ENCODE measurements at regions of chr1 and their contacts with region 1.

Region 1: DNA sequence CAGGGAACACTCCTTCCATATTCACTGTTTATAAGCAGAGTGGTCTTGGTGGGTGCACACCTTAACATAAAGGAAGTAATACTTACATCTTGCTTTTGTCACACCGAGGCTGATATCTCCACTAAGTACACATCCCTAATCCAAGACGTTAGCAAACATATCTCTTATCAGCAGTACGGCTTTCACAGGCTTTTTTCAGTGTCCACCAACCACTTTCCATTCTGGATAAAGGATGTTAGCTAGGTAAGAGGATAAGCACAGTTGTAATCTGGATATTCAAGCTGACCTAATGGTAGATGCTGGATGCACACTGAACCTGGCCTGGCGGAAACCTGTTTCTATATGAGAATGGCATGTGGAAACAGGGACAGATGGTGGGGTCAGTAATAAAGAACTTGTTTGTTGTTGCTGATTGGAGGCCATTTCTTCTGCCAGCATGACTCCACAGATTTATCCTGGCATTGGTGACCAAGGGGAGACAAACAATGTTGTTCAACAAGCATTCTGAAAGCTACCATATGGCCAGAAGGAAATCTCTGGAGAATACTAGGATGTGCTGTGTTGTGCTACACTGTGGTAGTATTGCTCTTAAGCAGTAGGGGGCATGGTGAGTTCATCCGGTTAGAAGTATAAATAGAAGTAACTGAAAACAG is 416.4 kb downstream of the PTBP2 start:
- DNase-seq: peak in 1 of 2 donors; percentile 15
- ATAC-seq: peak; percentile 98 to 99
- H3K4me3 ChIP-seq: peak overlapping the region; percentile 20 to 34 (median 26)
- H3K27ac ChIP-seq: peak overlapping the region in 3 of 4 donors; percentile 33 to 40 (median 35)
- H3K4me1 ChIP-seq: peaks cover 0 to 8% of the 10 kb centered on the region in 2 donors
- H3K27me3 ChIP-seq: no peaks in the 10 kb centered on the region
- CTCF ChIP-seq: peak in 4 of 5 experiments; percentile 47 to 64 (median 60)
- POLR2A ChIP-seq: no peak

Region 2: GRCh38 chr1:97013941-97014340 is 124.0 kb before region 1 on chr1:
- in situ Hi-C with region 1: no loop called
- intact Hi-C with region 1: no loop called
- DNase-seq: no peak
- ATAC-seq: no peak
- H3K4me3 ChIP-seq: no peak overlapping the region
- H3K27ac ChIP-seq: no peak overlapping the region
- H3K4me1 ChIP-seq: peaks cover 0 to 4% of the 10 kb centered on the region in 2 donors
- H3K27me3 ChIP-seq: no peaks in the 10 kb centered on the region
- CTCF ChIP-seq: no peak
- POLR2A ChIP-seq: no peak

Region 3: GRCh38 chr1:97820470-97821188 is 682.6 kb after region 1 on chr1:
- in situ Hi-C with region 1: no loop called
- intact Hi-C with region 1: loop called (anchors 5 kb)
- DNase-seq: no peak
- ATAC-seq: peak in 1 of 2 donors; percentile 56
- H3K4me3 ChIP-seq: no peak overlapping the region
- H3K27ac ChIP-seq: no peak overlapping the region
- H3K4me1 ChIP-seq: peaks cover 0 to 5% of the 10 kb centered on the region in 2 donors
- H3K27me3 ChIP-seq: no peaks in the 10 kb centered on the region
- CTCF ChIP-seq: peak in 4 of 5 experiments; percentile 28 to 47 (median 34)
- POLR2A ChIP-seq: no peak

Region 4: GRCh38 chr1:98053471-98054366 is 915.7 kb after region 1 on chr1:
- in situ Hi-C with region 1: loop called in 1 of 4 experiments (anchors 25 kb)
- intact Hi-C with region 1: loop called (anchors 2 kb)
- DNase-seq: peak in 1 of 2 donors; percentile 15
- ATAC-seq: peak; percentile 77 to 85
- H3K4me3 ChIP-seq: peak overlapping the region; percentile 49 to 57 (median 53)
- H3K27ac ChIP-seq: no peak overlapping the region
- H3K4me1 ChIP-seq: peaks cover 4 to 9% of the 10 kb centered on the region in 2 donors
- H3K27me3 ChIP-seq: peaks cover 45 to 58% (median 55%) of the 10 kb centered on the region in 3 donors
- CTCF ChIP-seq: peak; percentile 62 to 85 (median 78)
- POLR2A ChIP-seq: no peak

Measured in gastrocnemius medialis (tissue), 4 donors.